ENCODE measurements at regions of chr16 and their contacts with region 1.

Region 1: GRCh38 chr16:11689031-11689761 is 20.9 kb downstream of the SNN start:
- DNase-seq: no peak
- ATAC-seq: peak; percentile 64
- H3K4me3 Mint-ChIP-seq: no peak overlapping the region
- H3K27ac Mint-ChIP-seq: peak overlapping the region; percentile 27
- H3K4me1 Mint-ChIP-seq: peaks cover 17% of the 10 kb centered on the region
- H3K27me3 Mint-ChIP-seq: no peaks in the 10 kb centered on the region

Region 2: DNA sequence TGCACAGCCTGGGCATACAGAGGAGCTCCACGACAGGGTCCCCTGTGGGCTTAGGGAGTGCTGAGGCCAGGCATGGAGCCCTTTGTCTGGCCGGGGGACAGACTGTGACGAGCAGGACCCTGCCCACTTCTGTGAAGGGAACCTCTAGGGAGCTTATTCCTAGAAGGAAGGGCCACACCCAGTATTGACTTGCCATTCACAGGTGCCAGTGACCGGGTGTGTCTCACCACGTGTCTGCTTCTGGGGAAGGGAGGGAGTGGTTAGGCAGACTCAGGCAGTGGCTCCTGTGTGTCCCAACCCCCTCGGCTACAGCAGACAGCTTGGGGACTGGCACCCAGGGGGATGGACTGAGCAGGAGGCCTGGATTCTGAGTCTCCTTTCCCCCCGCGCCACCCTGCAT is 490.4 kb before region 1 on chr16:
- CTCF ChIA-PET with region 1: no interaction called
- POLR2A ChIA-PET with region 1: no interaction called
- intact Hi-C with region 1: no loop called
- DNase-seq: no peak
- ATAC-seq: no peak
- H3K4me3 Mint-ChIP-seq: no peak overlapping the region
- H3K27ac Mint-ChIP-seq: no peak overlapping the region
- H3K4me1 Mint-ChIP-seq: peaks cover 15% of the 10 kb centered on the region
- H3K27me3 Mint-ChIP-seq: no peaks in the 10 kb centered on the region

Region 3: DNA sequence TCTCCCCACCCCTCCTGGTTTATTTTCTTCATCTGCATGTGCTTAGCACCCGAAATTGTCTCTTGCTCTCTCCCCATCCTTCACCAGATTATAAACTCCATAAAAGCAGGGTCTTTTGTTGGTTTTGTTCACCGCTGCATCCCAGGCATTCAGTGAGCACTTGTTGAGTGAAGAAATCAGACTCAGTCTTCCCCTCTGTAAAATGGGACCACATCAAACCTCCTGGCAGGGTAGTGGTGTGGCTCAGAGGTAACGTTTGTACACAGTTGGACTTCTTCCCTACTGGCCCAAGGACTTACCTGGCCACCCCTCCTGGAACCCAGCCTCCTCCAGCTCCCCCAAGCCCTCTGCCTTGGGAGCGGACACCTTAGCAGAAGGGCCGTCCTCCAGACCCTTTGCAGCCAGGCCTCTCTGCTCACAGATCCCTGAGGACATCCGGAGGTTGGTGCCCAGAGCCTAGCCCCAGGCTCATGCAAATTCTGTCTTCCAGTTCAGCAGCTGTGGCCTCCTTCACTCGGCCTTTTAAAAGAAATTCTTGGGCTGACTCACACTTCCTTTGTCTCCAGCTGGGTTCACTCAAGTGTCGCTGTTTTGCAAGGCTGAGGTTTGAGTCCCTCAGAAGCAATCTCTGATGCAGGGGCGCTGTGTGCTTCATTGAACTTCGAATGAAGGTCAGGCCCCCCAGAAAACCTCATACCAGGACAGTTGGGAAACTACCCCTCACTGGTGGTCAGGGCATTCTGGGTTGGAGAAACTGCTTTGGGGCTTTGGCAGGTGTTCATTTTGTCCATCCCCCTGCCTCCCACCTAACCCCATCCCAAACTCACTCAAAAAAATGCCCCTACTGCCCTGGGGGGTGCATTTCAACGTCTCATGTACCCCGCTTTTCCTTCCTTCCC is 360.8 kb before region 1 on chr16:
- CTCF ChIA-PET with region 1: no interaction called
- POLR2A ChIA-PET with region 1: no interaction called
- intact Hi-C with region 1: no loop called
- DNase-seq: peak; percentile 73
- ATAC-seq: peak; percentile 81
- H3K4me3 Mint-ChIP-seq: peak overlapping the region; percentile 37
- H3K27ac Mint-ChIP-seq: peak overlapping the region; percentile 64
- H3K4me1 Mint-ChIP-seq: peaks cover 51% of the 10 kb centered on the region
- H3K27me3 Mint-ChIP-seq: no peaks in the 10 kb centered on the region

Region 4: GRCh38 chr16:11727796-11728543 is 38.8 kb after region 1 on chr16:
- CTCF ChIA-PET with region 1: no interaction called
- POLR2A ChIA-PET with region 1: no interaction called
- intact Hi-C with region 1: loop called in 1 of 2 experiments (anchors 2 kb)
- DNase-seq: no peak
- ATAC-seq: peak; percentile 85
- H3K4me3 Mint-ChIP-seq: no peak overlapping the region
- H3K27ac Mint-ChIP-seq: peak overlapping the region; percentile 47
- H3K4me1 Mint-ChIP-seq: peaks cover 30% of the 10 kb centered on the region
- H3K27me3 Mint-ChIP-seq: no peaks in the 10 kb centered on the region

Measured in activated CD4-positive, alpha-beta T cell treated with anti-CD3 and anti-CD28 coated beads for 36 hours (primary cell).